HEK293 (cell line): ENCODE measurements at regions of chr21 and their contacts with region 1.

Region 1: GRCh38 chr21:17679002-17679600 is 66.4 kb upstream of the BTG3 start:
- H3K4me3 ChIP-seq: no peak overlapping the region
- H3K27ac ChIP-seq: no peak overlapping the region
- H3K4me1 ChIP-seq: no peaks in the 10 kb centered on the region
- CTCF ChIP-seq: no peak

Region 2: GRCh38 chr21:17650292-17650691 is 28.8 kb before region 1 on chr21:
- CTCF ChIA-PET with region 1: no interaction called
- POLR2A ChIA-PET with region 1: no interaction called
- H3K4me3 ChIP-seq: no peak overlapping the region
- H3K27ac ChIP-seq: no peak overlapping the region
- H3K4me1 ChIP-seq: no peaks in the 10 kb centered on the region
- CTCF ChIP-seq: no peak

Region 3: GRCh38 chr21:17688912-17689874 is 10.1 kb after region 1 on chr21:
- CTCF ChIA-PET with region 1: interaction called, 23 read pairs
- POLR2A ChIA-PET with region 1: no interaction called
- H3K4me3 ChIP-seq: peak overlapping the region; percentile 18; the same call in 1 of the 2 replicates
- H3K27ac ChIP-seq: peak overlapping the region; percentile 12; the same call in 1 of the 2 replicates
- H3K4me1 ChIP-seq: no peaks in the 10 kb centered on the region
- CTCF ChIP-seq: no peak

Region 4: GRCh38 chr21:17699524-17700189 is 20.6 kb after region 1 on chr21:
- CTCF ChIA-PET with region 1: interaction called, 10 read pairs
- POLR2A ChIA-PET with region 1: no interaction called
- H3K4me3 ChIP-seq: no peak overlapping the region
- H3K27ac ChIP-seq: no peak overlapping the region
- H3K4me1 ChIP-seq: no peaks in the 10 kb centered on the region
- CTCF ChIP-seq: no peak

Region 5: DNA sequence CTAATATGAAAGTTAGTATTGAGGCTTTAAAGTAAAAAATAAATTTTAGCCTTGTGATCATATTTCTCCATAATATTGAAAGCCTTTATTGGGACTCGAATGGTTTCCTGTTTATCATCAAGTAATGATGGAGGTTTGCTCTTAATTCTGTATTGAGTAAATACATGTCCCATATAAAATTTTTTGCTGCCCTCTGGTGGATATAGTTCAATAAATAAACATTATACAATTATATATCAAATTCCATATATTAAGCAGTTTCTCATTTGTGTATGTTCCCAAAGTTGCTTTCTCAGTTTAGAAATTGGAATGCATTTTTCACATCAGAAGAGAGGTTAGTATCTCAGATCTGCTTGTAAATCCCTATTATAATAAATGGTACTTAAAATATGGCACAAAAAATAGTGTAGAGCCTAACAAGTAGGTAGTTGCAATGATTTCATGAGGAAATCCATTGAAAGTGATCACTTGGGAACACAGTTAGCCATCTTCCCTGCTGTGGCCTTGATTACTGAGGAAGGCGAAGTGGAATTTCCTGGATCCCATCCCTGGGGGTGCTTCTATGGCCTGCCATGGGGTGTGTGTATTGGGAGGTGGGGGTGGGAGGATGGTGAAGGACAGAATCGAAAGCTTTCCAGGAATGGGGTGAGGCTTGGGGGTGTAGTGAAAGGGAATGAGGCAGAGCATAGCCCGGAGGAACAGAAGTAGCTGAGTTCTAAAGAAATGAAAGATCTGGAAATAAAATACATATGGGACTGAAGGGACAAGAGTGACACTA is 224.1 kb after region 1 on chr21:
- CTCF ChIA-PET with region 1: interaction called, 17 read pairs
- POLR2A ChIA-PET with region 1: no interaction called
- H3K4me3 ChIP-seq: no peak overlapping the region
- H3K27ac ChIP-seq: no peak overlapping the region
- H3K4me1 ChIP-seq: no peaks in the 10 kb centered on the region
- CTCF ChIP-seq: no peak